ENCODE measurements at regions of chr6 and their contacts with region 1.

Region 1: GRCh38 chr6:27177485-27178406 is 69.8 kb upstream of the PRSS16 start:
- DNase-seq: peak; percentile 90
- ATAC-seq: peak; percentile 86
- H3K4me3 ChIP-seq: peak overlapping the region; percentile 88 to 100 (median 98)
- H3K4me3 Mint-ChIP-seq: peak overlapping the region; percentile 96
- H3K27ac ChIP-seq: peak overlapping the region; percentile 34 to 78
- H3K27ac Mint-ChIP-seq: peak overlapping the region; percentile 91
- H3K4me1 ChIP-seq: peaks cover 0 to 7% of the 10 kb centered on the region in 2 donors
- H3K4me1 Mint-ChIP-seq: peaks cover 15% of the 10 kb centered on the region
- H3K27me3 ChIP-seq: no peaks in the 10 kb centered on the region
- H3K27me3 Mint-ChIP-seq: no peaks in the 10 kb centered on the region
- CTCF ChIP-seq: peak; percentile 71

Region 2: DNA sequence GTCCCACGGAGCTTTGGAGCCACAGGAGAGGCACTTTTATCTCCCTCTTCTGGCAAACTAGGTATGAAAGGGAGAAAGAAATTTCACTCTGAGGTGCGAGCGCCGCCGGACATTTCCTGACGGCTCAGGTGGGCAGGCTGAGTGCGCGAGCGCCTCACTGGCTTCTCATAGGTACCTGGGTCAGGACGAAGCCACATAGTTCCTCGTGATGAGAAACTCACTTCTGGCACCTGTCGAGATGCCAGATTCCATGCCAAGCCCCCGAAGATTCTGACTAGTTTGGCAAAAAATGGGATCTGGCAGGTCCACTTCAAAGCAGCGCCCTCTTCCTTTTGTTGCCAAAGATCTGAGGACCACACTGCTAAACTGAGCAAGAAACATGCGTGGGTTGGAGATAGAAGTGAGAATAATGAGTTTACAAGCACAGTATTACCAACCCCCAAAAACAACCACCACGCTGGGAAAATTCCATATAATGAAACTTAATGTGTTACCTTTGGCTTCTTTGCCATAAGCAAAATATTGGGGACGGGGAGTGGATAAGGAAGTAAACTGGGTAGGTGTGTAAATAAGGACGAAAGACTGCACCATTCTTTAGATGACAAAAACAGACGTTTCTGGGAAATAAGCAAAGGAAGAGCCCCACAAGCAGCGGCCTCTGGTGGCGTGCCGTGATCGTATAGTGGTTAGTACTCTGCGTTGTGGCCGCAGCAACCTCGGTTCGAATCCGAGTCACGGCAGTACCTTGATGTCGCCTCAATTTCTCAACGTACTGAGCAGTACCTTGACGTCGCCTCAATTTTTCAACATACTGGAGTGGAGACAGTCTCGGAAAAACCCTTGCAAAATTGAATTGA is 20.1 kb before region 1 on chr6:
- CTCF ChIA-PET with region 1: interaction called, 55 read pairs
- POLR2A ChIA-PET with region 1: interaction called, 3 read pairs
- intact Hi-C with region 1: loop called (anchors 1 kb)
- DNase-seq: peak; percentile 91
- ATAC-seq: peak; percentile 77
- H3K4me3 ChIP-seq: peak overlapping the region; percentile 59 to 91 (median 72)
- H3K4me3 Mint-ChIP-seq: peak overlapping the region; percentile 94
- H3K27ac ChIP-seq: peak overlapping the region; percentile 18 to 45
- H3K27ac Mint-ChIP-seq: peak overlapping the region; percentile 85
- H3K4me1 ChIP-seq: peaks cover 17 to 20% of the 10 kb centered on the region in 2 donors
- H3K4me1 Mint-ChIP-seq: peaks cover 25% of the 10 kb centered on the region
- H3K27me3 ChIP-seq: no peaks in the 10 kb centered on the region
- H3K27me3 Mint-ChIP-seq: no peaks in the 10 kb centered on the region
- CTCF ChIP-seq: peak; percentile 64

Region 3: DNA sequence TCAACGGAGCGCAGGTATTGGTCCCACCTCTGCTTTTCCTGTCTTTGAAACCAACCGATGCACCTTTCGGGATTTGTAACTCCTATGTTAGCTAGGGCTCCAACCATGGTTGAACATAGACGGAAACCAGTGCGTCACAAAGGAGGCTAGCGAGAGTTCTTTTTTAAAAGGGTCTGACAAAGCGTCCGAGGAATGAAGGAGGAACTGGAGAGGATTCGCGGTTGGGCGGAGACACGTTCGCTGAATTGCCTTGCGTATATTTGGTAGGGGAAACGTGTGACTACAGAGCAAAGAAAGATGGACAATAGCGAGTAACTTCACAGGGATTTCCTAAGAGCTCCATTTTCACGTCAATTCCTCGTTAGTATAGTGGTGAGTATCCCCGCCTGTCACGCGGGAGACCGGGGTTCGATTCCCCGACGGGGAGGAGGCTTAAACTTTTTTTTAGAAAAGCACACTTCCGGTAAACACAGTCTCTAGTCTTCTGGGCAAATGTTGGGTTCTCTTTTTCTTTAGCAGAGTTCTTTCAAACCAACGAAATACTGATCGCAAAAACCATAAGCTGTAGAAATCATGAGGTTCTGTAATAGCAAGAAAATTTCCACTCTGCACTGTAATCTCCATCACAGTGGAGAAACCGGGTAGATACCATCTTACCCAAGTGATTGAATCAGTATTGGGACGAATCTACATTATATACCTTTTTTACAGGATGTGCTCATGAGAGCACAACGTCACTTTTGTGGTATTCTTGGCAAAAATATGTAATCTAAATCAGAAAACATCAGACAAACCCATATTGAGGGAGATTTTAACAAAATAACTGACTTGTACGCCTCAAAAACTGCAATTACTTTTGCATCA is 301.8 kb after region 1 on chr6:
- CTCF ChIA-PET with region 1: no interaction called
- POLR2A ChIA-PET with region 1: interaction called, 3 read pairs
- intact Hi-C with region 1: loop called (anchors 1 kb)
- DNase-seq: peak; percentile 96
- ATAC-seq: peak; percentile 77
- H3K4me3 ChIP-seq: peak overlapping the region; percentile 88 to 97 (median 95)
- H3K4me3 Mint-ChIP-seq: no peak overlapping the region
- H3K27ac ChIP-seq: peak overlapping the region; percentile 98
- H3K27ac Mint-ChIP-seq: no peak overlapping the region
- H3K4me1 ChIP-seq: peaks cover 15 to 17% of the 10 kb centered on the region in 2 donors
- H3K4me1 Mint-ChIP-seq: peaks cover 6% of the 10 kb centered on the region
- H3K27me3 ChIP-seq: no peaks in the 10 kb centered on the region
- H3K27me3 Mint-ChIP-seq: no peaks in the 10 kb centered on the region
- CTCF ChIP-seq: no peak

Region 4: GRCh38 chr6:27772261-27773001 is 594.7 kb after region 1 on chr6:
- CTCF ChIA-PET with region 1: interaction called, 15 read pairs
- POLR2A ChIA-PET with region 1: no interaction called
- intact Hi-C with region 1: no loop called
- DNase-seq: peak; percentile 87
- ATAC-seq: peak; percentile 88
- H3K4me3 ChIP-seq: no peak overlapping the region
- H3K4me3 Mint-ChIP-seq: peak overlapping the region; percentile 65
- H3K27ac ChIP-seq: peak overlapping the region in 1 of 2 donors; percentile 2
- H3K27ac Mint-ChIP-seq: peak overlapping the region; percentile 84
- H3K4me1 ChIP-seq: peaks cover 26 to 29% of the 10 kb centered on the region in 2 donors
- H3K4me1 Mint-ChIP-seq: peaks cover 36% of the 10 kb centered on the region
- H3K27me3 ChIP-seq: peaks cover 0 to 4% (median 2%) of the 10 kb centered on the region in 4 experiments
- H3K27me3 Mint-ChIP-seq: peaks cover 10% of the 10 kb centered on the region
- CTCF ChIP-seq: peak; percentile 93

Measured in B cell (primary cell).